ENCODE measurements at regions of chr22 and their contacts with region 1.

Region 1: GRCh38 chr22:45645526-45646414 is 25.9 kb upstream of the ATXN10 start:
- DNase-seq: peak; percentile 82 to 90
- H3K4me3 ChIP-seq: peak overlapping the region in 2 of 4 donors; percentile 8
- H3K27ac ChIP-seq: no peak overlapping the region
- H3K4me1 ChIP-seq: peaks cover 8 to 12% (median 10%) of the 10 kb centered on the region in 4 donors
- H3K27me3 ChIP-seq: peaks cover 7 to 83% (median 18%) of the 10 kb centered on the region in 3 donors
- CTCF ChIP-seq: peak in 6 of 7 experiments; percentile 41 to 97 (median 92)
- EP300 ChIP-seq: no peak
- POLR2A ChIP-seq: no peak

Region 2: DNA sequence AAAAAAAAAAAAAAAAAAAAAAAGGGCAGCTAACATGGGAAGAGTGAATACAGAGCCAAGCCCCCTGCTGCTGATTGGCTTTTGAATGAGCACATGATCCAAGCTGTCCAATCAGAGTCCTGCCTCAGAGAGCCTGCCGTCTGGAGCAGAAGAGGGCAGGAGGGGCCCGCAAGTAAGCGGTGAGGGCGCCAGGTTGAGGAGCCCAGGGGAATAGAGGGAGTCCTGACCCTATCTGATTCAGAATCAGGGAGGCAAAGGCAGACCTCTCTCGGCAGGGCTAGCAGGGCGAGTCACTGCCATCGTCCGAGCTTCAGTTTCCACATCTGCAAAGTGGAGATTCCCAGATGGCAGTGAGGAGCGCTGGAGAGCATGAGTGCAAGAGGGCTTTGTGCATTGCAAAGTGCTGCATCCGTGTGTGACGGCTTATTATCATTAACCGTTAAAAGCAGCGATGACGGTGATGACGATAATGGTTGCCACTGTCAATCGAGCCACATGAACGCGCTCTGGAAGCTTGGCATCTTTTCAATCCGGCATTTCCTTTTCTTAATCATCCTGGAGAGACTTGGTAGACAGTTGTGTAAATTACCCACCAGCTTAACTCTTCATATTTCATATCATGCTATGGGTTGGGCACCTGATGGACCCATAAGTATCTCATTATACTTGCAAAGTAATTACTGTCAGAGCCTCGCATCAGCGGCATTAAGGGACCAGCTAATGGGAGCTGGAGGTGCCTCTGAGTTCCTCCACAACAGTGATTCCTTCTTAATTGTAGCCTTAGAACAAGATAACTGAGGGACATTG is 42.7 kb before region 1 on chr22:
- intact Hi-C with region 1: no loop called
- DNase-seq: no peak
- H3K4me3 ChIP-seq: no peak overlapping the region
- H3K27ac ChIP-seq: no peak overlapping the region
- H3K4me1 ChIP-seq: peaks cover 0 to 18% (median under 1%) of the 10 kb centered on the region in 4 donors
- H3K27me3 ChIP-seq: no peaks in the 10 kb centered on the region
- CTCF ChIP-seq: no peak
- EP300 ChIP-seq: no peak
- POLR2A ChIP-seq: no peak

Region 3: GRCh38 chr22:45863981-45864751 is 218.4 kb after region 1 on chr22:
- intact Hi-C with region 1: loop called (anchors 10 kb)
- DNase-seq: peak; percentile 77 to 86
- H3K4me3 ChIP-seq: no peak overlapping the region
- H3K27ac ChIP-seq: no peak overlapping the region
- H3K4me1 ChIP-seq: peaks cover 13 to 32% (median 24%) of the 10 kb centered on the region in 4 donors
- H3K27me3 ChIP-seq: peaks cover 17 to 60% (median 45%) of the 10 kb centered on the region in 3 donors
- CTCF ChIP-seq: peak in 5 of 7 experiments; percentile 58 to 92 (median 86)
- EP300 ChIP-seq: no peak
- POLR2A ChIP-seq: no peak